ENCODE measurements at regions of chr5 and their contacts with region 1.

Region 1: GRCh38 chr5:27865536-27865935 is 827.1 kb upstream of the CDH9 start:
- DNase-seq: no peak
- H3K4me3 ChIP-seq: no peak overlapping the region
- H3K27ac ChIP-seq: no peak overlapping the region
- H3K4me1 ChIP-seq: no peaks in the 10 kb centered on the region
- H3K27me3 ChIP-seq: no peaks in the 10 kb centered on the region
- CTCF ChIP-seq: no peak

Region 2: DNA sequence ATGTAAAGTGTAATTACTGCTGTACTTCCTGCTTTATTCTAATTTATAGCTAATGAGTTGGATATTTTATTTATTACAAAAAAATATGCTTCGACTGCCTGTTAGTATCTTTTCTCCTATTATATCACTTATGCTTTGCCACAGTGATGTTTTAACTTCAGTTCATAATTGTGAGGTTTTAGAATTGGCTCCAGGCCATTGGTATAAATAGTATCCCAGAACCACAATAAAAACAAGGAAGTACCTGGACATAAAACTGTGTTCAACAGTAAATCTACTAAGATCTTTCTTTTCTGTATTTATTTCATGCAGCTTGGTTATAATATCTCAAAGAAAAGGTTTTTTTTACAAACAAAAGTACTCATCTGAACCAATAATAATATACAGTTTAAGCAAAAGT is 472.8 kb before region 1 on chr5:
- CTCF ChIA-PET with region 1: no interaction called
- POLR2A ChIA-PET with region 1: no interaction called
- intact Hi-C with region 1: no loop called
- DNase-seq: no peak
- H3K4me3 ChIP-seq: no peak overlapping the region
- H3K27ac ChIP-seq: no peak overlapping the region
- H3K4me1 ChIP-seq: no peaks in the 10 kb centered on the region
- H3K27me3 ChIP-seq: no peaks in the 10 kb centered on the region
- CTCF ChIP-seq: no peak

Region 3: DNA sequence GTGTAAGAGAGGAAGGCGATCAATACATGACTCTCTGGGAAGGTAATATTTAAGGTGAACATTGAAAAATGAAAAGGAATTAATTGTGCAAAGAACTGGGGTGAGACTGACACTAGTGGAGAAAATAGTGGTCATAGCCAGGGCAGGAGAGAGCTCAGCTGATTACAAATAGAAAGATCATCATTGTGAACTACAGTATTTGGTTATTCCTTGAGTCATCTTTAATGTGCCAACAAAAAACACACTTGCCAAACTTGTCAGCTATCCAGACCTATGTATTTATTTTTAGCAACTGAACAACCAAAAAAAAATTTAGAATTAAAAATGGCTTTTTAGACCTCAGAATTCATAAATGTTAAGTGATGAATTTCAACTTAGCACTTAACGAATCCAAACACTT is 77.4 kb before region 1 on chr5:
- CTCF ChIA-PET with region 1: no interaction called
- POLR2A ChIA-PET with region 1: interaction called, 14 read pairs
- intact Hi-C with region 1: no loop called
- DNase-seq: no peak
- H3K4me3 ChIP-seq: no peak overlapping the region
- H3K27ac ChIP-seq: no peak overlapping the region
- H3K4me1 ChIP-seq: no peaks in the 10 kb centered on the region
- H3K27me3 ChIP-seq: no peaks in the 10 kb centered on the region
- CTCF ChIP-seq: no peak